ENCODE measurements at regions of chr9 and their contacts with region 1.

Region 1: GRCh38 chr9:124708633-124709291 is 62.3 kb downstream of the NR6A1 start:
- DNase-seq: no peak
- H3K4me3 ChIP-seq: no peak overlapping the region
- H3K27ac ChIP-seq: no peak overlapping the region
- H3K4me1 ChIP-seq: no peaks in the 10 kb centered on the region
- H3K27me3 ChIP-seq: no peaks in the 10 kb centered on the region
- CTCF ChIP-seq: no peak

Region 2: DNA sequence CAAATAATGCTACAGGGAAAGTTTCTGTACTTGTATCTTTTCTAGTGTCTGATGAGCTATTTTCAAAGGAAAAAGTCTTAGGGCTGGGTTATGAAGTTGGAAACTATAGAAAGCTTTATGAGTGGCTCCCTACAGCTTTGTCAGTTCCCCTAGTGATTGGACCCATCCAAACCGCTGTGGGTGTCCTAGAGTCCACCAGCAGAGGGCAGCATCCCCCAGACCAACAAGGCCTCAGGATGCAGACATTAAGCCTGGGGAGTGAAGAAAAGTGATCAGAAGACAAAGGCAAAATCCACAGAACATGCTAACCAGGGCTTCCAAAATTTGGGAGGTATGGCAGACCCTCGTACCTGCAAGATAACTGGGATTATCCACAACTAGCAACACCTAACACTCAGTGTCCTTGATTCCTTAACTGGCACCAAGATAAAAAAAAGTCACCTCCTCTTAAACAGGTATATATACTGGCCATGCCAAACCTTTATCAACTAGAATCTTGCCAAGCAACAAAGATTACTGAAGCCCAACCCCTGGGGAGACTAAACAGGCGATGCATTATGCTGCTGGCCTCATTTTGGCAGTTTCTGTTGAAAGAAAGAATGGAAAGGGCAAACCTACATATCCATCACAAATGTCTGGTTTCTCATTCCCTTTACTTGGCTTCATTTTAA is 91.2 kb before region 1 on chr9:
- intact Hi-C with region 1: loop called (anchors 1 kb)
- DNase-seq: peak in 1 of 2 donors; percentile 82
- H3K4me3 ChIP-seq: no peak overlapping the region
- H3K27ac ChIP-seq: no peak overlapping the region
- H3K4me1 ChIP-seq: no peaks in the 10 kb centered on the region
- H3K27me3 ChIP-seq: no peaks in the 10 kb centered on the region
- CTCF ChIP-seq: peak; percentile 78 to 84 (median 82)

Measured in ascending aorta (tissue), 2 donors.